AG04450 (cell line): ENCODE measurements at regions of chr11 and their contacts with region 1.

Region 1: DNA sequence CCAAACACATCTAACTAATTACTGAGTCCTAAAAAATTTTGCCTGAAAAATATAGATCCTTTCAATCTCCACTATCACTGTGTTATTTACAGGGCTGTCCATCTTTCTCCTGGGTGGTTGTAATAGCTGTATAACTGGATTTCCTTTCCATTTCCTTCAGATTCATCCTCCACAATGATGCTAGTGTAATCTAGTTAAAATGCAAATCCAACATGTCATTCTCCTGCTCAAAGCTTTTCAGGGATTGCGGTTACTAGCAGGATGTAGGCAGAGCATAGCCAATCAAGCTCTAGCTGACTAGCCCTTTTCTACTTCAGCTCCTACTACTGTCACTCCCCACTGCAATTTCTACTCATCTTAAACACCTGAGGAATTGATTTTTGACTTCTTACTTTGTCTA is 283.0 kb downstream of the RAB38 start:
- DNase-seq: no peak
- H3K4me3 ChIP-seq: no peak overlapping the region
- H3K27ac ChIP-seq: no peak overlapping the region
- H3K27me3 ChIP-seq: peaks cover 2% of the 10 kb centered on the region
- CTCF ChIP-seq: no peak

Region 2: DNA sequence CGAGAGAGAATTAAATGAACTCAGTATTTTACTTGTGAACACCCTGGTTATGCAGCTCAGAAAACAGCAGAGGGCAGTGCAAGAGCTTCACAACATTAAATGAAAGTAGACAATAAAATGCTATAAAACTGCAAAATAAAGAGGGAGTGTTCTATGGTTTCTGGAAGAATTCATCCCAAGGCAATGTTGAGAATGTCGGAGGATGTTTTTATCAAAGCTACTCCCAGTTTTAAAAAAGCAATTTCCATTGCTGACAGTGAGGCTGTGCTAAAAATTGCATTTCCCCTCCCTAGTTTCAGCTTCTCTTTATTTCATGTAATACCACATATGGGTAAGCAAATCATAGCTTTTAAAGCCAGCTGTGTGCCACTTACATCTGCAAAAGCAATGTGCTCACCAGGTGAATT is 13.9 kb before region 1 on chr11:
- CTCF ChIA-PET with region 1: interaction called, 11 read pairs
- POLR2A ChIA-PET with region 1: no interaction called
- DNase-seq: peak; percentile 16
- H3K4me3 ChIP-seq: no peak overlapping the region
- H3K27ac ChIP-seq: no peak overlapping the region
- H3K27me3 ChIP-seq: no peaks in the 10 kb centered on the region
- CTCF ChIP-seq: peak; percentile 61